ENCODE measurements at regions of chr12 and their contacts with region 1.

Region 1: GRCh38 chr12:57111031-57111734 is at the start of gene STAT6:
- DNase-seq: peak; percentile 53 to 94 (median 87)
- ATAC-seq: peak; percentile 77
- H3K4me3 ChIP-seq: peak within 1 kb of the TSS; percentile 75
- H3K4me3 Mint-ChIP-seq: peak within 1 kb of the TSS; percentile 89 to 100 (median 98)
- H3K27ac ChIP-seq: peak within 1 kb of the TSS; percentile 92
- H3K27ac Mint-ChIP-seq: peak within 1 kb of the TSS; percentile 93 to 100 (median 97)
- H3K4me1 ChIP-seq: peaks cover 12 to 26% of the 10 kb centered on the region in 2 donors
- H3K4me1 Mint-ChIP-seq: peaks cover 41 to 54% (median 46%) of the 10 kb centered on the region in 7 donors
- H3K27me3 ChIP-seq: no peaks in the 10 kb centered on the region
- H3K27me3 Mint-ChIP-seq: no peaks in the 10 kb centered on the region
- total RNA-seq, gene STAT6: 206 to 403 (median 294) TPM

Region 2: GRCh38 chr12:56688129-56688845 is 422.9 kb before region 1 on chr12 and contains the start of gene PTGES3:
- CTCF ChIA-PET with region 1: no interaction called
- POLR2A ChIA-PET with region 1: interaction called, 13 read pairs
- intact Hi-C with region 1: loop called (anchors 1 kb)
- DNase-seq: peak; percentile 95 to 98 (median 98)
- ATAC-seq: peak; percentile 87
- H3K4me3 ChIP-seq: peak within 1 kb of the TSS; percentile 80
- H3K4me3 Mint-ChIP-seq: peak within 1 kb of the TSS; percentile 97 to 100 (median 100)
- H3K27ac ChIP-seq: peak within 1 kb of the TSS; percentile 98
- H3K27ac Mint-ChIP-seq: peak within 1 kb of the TSS; percentile 95 to 100 (median 99)
- H3K4me1 ChIP-seq: peaks cover 12 to 19% of the 10 kb centered on the region in 2 donors
- H3K4me1 Mint-ChIP-seq: peaks cover 20 to 41% (median 34%) of the 10 kb centered on the region in 7 donors
- H3K27me3 ChIP-seq: no peaks in the 10 kb centered on the region
- H3K27me3 Mint-ChIP-seq: no peaks in the 10 kb centered on the region
- total RNA-seq, gene PTGES3: 111 to 229 (median 153) TPM

Region 3: DNA sequence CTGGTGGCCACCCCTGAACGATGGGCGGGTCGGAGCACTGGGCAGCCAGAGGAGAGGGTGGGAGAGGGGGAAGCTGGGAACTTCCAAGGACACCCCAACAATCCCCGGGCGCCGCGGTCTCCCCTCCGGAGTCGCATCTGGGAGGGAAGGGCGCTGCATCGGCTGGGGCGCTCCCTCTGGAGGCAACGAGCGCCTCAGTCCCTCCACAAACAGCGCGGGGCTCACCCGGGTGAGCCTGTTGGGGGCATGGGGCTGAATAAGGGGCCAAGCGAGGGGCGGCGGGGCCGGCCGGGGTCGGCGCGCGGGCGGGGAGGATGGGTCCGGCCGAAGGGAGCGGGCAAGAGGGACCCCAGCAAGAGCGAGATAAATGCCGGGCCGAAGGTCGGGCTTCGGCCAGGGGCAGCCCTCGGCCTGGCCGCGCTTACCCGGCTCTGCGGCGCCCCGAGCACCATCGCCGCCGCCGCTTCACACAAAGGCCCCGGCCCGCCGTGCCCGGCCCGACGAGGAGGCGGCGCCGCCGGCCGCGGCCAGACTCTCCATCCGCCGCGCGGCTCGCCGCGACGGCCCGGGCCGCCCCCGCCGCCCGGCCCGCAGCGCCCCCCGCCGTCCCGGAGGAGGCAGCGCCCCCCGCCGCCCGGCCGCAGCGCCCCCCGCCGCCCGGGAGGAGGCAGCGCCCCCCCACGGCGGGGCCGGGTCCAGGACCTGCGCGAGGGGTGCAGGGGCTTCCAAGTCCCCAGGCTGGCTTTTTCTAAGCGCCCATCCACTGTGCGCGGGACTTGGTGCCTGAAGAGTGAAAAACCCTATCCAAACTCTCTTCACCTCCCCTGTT is 105.0 kb before region 1 on chr12 and contains the start of gene ZBTB39:
- CTCF ChIA-PET with region 1: interaction called, 52 read pairs
- POLR2A ChIA-PET with region 1: interaction called, 39 read pairs
- intact Hi-C with region 1: loop called (anchors 1 kb)
- DNase-seq: peak; percentile 51 to 84 (median 62)
- ATAC-seq: peak; percentile 91
- H3K4me3 ChIP-seq: peak within 1 kb of the TSS; percentile 63
- H3K4me3 Mint-ChIP-seq: peak within 1 kb of the TSS; percentile 90 to 94 (median 92)
- H3K27ac ChIP-seq: peak within 1 kb of the TSS; percentile 82
- H3K27ac Mint-ChIP-seq: peak within 1 kb of the TSS; percentile 92 to 95 (median 95)
- H3K4me1 ChIP-seq: peaks cover 20 to 46% of the 10 kb centered on the region in 2 donors
- H3K4me1 Mint-ChIP-seq: peaks cover 36 to 80% (median 76%) of the 10 kb centered on the region in 7 donors
- H3K27me3 ChIP-seq: no peaks in the 10 kb centered on the region
- H3K27me3 Mint-ChIP-seq: no peaks in the 10 kb centered on the region
- total RNA-seq, gene ZBTB39: 5.8 to 12.9 (median 10.7) TPM

Region 4: GRCh38 chr12:57078519-57079404 is 32.4 kb before region 1 on chr12 and contains the start of gene NEMP1:
- CTCF ChIA-PET with region 1: interaction called, 212 read pairs
- POLR2A ChIA-PET with region 1: interaction called, 294 read pairs
- intact Hi-C with region 1: loop called (anchors 1 kb)
- DNase-seq: peak; percentile 65 to 99 (median 98)
- ATAC-seq: peak; percentile 98
- H3K4me3 ChIP-seq: peak within 1 kb of the TSS; percentile 84
- H3K4me3 Mint-ChIP-seq: peak within 1 kb of the TSS; percentile 86 to 99 (median 94)
- H3K27ac ChIP-seq: peak within 1 kb of the TSS; percentile 85
- H3K27ac Mint-ChIP-seq: peak within 1 kb of the TSS; percentile 89 to 99 (median 92)
- H3K4me1 ChIP-seq: peaks cover 6 to 7% of the 10 kb centered on the region in 2 donors
- H3K4me1 Mint-ChIP-seq: peaks cover 0 to 49% (median 25%) of the 10 kb centered on the region in 7 donors
- H3K27me3 ChIP-seq: no peaks in the 10 kb centered on the region
- H3K27me3 Mint-ChIP-seq: no peaks in the 10 kb centered on the region
- total RNA-seq, gene NEMP1: 13.1 to 47.6 (median 29.3) TPM

Region 5: GRCh38 chr12:57182921-57183790 is 72.0 kb after region 1 on chr12:
- CTCF ChIA-PET with region 1: interaction called, 13 read pairs
- POLR2A ChIA-PET with region 1: interaction called, 6 read pairs
- intact Hi-C with region 1: no loop called
- DNase-seq: peak; percentile 54 to 85 (median 73)
- ATAC-seq: peak; percentile 95
- H3K4me3 ChIP-seq: no peak overlapping the region
- H3K4me3 Mint-ChIP-seq: no peak overlapping the region
- H3K27ac ChIP-seq: no peak overlapping the region
- H3K27ac Mint-ChIP-seq: peak overlapping the region in 1 of 9 donors; percentile 24
- H3K4me1 ChIP-seq: no peaks in the 10 kb centered on the region
- H3K4me1 Mint-ChIP-seq: peaks cover 2 to 10% (median 6%) of the 10 kb centered on the region in 7 donors
- H3K27me3 ChIP-seq: no peaks in the 10 kb centered on the region
- H3K27me3 Mint-ChIP-seq: peaks cover 0 to 2% (median 0%) of the 10 kb centered on the region in 5 donors

Region 6: GRCh38 chr12:57261428-57261865 is 150.3 kb after region 1 on chr12:
- CTCF ChIA-PET with region 1: no interaction called
- POLR2A ChIA-PET with region 1: no interaction called
- intact Hi-C with region 1: no loop called
- DNase-seq: no peak
- ATAC-seq: no peak
- H3K4me3 ChIP-seq: no peak overlapping the region
- H3K4me3 Mint-ChIP-seq: no peak overlapping the region
- H3K27ac ChIP-seq: no peak overlapping the region
- H3K27ac Mint-ChIP-seq: peak overlapping the region in 1 of 9 donors; percentile 64
- H3K4me1 ChIP-seq: no peaks in the 10 kb centered on the region
- H3K4me1 Mint-ChIP-seq: peaks cover 0 to 5% (median 0%) of the 10 kb centered on the region in 7 donors
- H3K27me3 ChIP-seq: no peaks in the 10 kb centered on the region
- H3K27me3 Mint-ChIP-seq: no peaks in the 10 kb centered on the region

Region 7: DNA sequence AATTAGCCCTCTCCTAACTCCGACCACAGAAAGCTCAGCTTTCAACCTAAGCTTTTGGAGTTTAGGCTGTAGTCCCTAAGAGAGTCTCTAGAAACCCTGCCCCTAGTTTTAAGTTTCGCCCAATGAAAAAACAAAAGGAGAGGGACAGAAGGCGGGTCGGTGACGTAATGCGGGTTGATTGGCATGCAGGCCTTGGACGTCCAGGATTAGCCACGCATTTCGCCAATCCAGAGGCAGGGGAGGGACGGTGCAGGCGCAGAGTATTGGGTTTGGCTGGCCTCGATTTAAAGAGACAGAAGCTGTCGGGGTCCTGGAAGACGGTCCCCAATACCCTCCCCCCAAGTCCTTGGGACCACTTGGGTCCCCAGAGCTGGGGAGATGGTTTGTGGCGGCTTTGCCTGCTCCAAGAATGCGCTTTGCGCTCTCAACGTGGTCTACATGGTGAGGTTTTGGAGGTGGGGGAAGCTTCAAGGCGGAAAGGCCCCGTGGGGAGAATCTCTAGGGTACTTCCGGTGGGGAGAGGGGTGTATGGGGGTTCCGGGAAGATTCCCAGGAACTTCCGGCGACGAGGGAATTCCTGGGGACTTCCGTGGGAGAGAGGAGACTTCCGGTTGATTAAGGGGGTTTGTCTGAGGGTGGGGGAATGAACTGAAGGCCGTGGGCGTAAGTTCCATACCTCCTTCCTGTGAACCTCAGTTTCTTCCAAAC is 633.7 kb after region 1 on chr12 and contains the start of gene TSPAN31:
- CTCF ChIA-PET with region 1: no interaction called
- POLR2A ChIA-PET with region 1: no interaction called
- intact Hi-C with region 1: loop called in 1 of 2 experiments (anchors 5 kb)
- DNase-seq: peak; percentile 70 to 97 (median 94)
- ATAC-seq: peak; percentile 89
- H3K4me3 ChIP-seq: peak within 1 kb of the TSS; percentile 92
- H3K4me3 Mint-ChIP-seq: peak within 1 kb of the TSS; percentile 82 to 100 (median 91)
- H3K27ac ChIP-seq: peak within 1 kb of the TSS; percentile 91
- H3K27ac Mint-ChIP-seq: peak within 1 kb of the TSS; percentile 88 to 97 (median 95)
- H3K4me1 ChIP-seq: peaks cover 33 to 34% of the 10 kb centered on the region in 2 donors
- H3K4me1 Mint-ChIP-seq: peaks cover 35 to 64% (median 52%) of the 10 kb centered on the region in 7 donors
- H3K27me3 ChIP-seq: no peaks in the 10 kb centered on the region
- H3K27me3 Mint-ChIP-seq: no peaks in the 10 kb centered on the region
- total RNA-seq, gene TSPAN31: 12.3 to 23.9 (median 20.3) TPM